ENCODE measurements at regions of chr3 and their contacts with region 1.

Region 1: DNA sequence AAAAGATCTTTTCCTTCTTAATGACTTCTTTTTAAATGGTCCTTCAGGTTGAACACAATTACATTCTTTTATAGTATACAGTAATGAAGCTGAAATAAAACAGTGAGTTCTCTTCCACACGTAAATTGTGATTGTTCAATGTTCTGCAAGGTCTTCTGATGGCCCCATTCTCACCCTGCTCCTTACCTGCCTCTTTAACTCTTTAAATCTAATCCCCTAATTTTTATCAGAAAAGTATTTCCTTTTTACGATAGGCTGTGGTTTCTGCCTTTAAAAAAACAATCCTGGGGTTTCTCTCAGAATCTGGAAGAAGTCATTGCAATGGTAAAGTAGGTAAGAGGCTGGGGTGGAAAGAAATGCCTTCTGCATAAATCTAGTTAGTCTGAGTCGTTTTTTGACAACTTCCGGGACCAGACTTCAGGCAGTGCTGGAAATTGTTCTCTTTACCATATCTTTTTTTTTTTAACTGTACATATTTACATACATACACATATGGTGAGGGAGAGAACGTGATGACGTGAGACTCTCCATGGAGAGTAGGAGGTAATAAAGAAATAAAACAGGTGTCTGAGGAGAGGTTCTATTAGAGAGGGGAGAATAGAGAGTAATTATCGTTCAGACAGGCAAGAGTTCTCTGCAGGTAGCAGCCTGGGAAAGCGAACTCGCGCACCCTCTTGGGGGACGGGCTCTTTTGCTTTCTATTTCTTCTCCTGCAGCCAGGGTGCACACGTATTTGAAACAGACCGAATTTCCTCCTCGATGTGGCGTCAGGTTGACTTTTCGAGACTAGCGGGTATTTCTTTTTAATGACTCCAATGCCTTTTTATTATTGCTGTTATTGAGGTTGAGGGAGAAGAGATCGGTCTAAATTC is at the start of gene SIDT1:
- DNase-seq: peak; percentile 71
- ATAC-seq: peak; percentile 71
- H3K4me3 ChIP-seq: peak within 1 kb of the TSS; percentile 97
- H3K27ac ChIP-seq: peak within 1 kb of the TSS; percentile 98
- H3K4me1 ChIP-seq: peaks cover 6% of the 10 kb centered on the region
- H3K27me3 ChIP-seq: no peaks in the 10 kb centered on the region
- CTCF ChIP-seq: peak in 1 of 3 experiments; percentile 25; a peak in 2 of 6 replicates
- EP300 ChIP-seq: 0 out of 4 replicates have a peak, but pooled peaks of 1 of the 2 experiments have one; percentile 26
- POLR2A ChIP-seq: peak; percentile 74
- RAD21 ChIP-seq: no peak
- polyA plus RNA-seq, gene SIDT1: 3.0 to 3.2 TPM

Region 2: DNA sequence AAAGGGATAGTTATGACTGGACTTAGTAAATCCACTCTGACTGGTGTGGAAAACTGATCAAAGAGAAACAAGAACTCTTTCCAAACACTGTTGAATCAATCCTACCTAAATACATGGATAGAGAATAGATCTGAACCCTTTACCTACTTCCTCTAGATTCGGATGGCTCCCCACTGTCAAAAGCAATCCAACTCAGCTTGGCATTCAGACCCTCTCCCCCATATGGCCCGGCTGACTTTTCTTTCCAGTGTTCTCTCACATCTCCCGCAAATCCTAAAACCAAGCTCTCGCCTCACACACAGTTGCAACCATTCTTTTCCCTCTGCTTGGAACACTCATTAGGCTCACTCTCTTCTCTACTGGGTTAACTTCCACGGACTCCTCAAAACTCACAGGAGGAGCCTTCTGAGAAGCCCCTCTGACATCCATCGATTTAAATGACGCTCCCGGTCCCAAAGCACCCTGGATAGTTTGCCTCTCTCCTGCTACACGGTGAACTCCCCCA is 17.7 kb before region 1 on chr3:
- CTCF ChIA-PET with region 1: interaction called, 12 read pairs
- POLR2A ChIA-PET with region 1: interaction called, 19 read pairs
- RAD21 ChIA-PET with region 1: interaction called, 10 read pairs
- SMC1A ChIA-PET with region 1: interaction called, 45 read pairs
- in situ Hi-C with region 1: no loop called
- intact Hi-C with region 1: loop called (anchors 1 kb)
- DNase-seq: no peak
- ATAC-seq: peak; percentile 9
- H3K4me3 ChIP-seq: peak overlapping the region; percentile 87
- H3K27ac ChIP-seq: peak overlapping the region; percentile 76
- H3K4me1 ChIP-seq: peaks cover 12% of the 10 kb centered on the region
- H3K27me3 ChIP-seq: no peaks in the 10 kb centered on the region
- CTCF ChIP-seq: no peak
- EP300 ChIP-seq: 0 out of 4 replicates have a peak, but pooled peaks of 1 of the 2 experiments have one; percentile 35
- POLR2A ChIP-seq: no peak
- RAD21 ChIP-seq: no peak

Region 3: DNA sequence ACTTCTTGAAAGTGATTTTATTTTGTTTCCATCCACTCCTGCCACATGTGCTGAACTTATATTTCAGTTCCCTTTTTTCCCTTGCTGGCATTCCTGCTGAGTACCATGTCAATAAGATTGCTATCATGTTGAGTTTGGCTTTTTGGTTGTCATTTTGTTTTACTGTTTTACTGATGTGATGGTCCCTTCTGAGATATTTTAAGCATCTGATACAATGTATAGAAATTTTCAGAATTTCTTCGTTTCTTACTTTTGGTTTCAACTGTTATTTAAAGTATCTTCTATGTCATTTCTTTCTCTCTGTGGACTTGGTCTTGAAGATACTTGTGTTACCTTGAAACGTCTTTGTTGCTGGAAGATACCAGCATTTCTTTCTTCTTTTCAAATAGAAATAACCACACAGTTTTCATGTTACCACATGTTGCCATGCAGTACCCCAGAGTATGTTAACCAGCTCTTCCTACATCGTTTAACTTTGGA is 14.4 kb after region 1 on chr3:
- CTCF ChIA-PET with region 1: interaction called, 74 read pairs
- POLR2A ChIA-PET with region 1: interaction called, 10 read pairs
- RAD21 ChIA-PET with region 1: interaction called, 35 read pairs
- SMC1A ChIA-PET with region 1: interaction called, 20 read pairs
- in situ Hi-C with region 1: no loop called
- intact Hi-C with region 1: loop called (anchors 1 kb)
- DNase-seq: peak; percentile 57
- ATAC-seq: peak; percentile 88
- H3K4me3 ChIP-seq: peak overlapping the region; percentile 52; the same call in 1 of the 2 replicates
- H3K27ac ChIP-seq: peak overlapping the region; percentile 76
- H3K4me1 ChIP-seq: peaks cover 26% of the 10 kb centered on the region
- H3K27me3 ChIP-seq: no peaks in the 10 kb centered on the region
- CTCF ChIP-seq: no peak
- EP300 ChIP-seq: 0 out of 4 replicates have a peak, but pooled peaks of 1 of the 2 experiments have one; percentile 39
- POLR2A ChIP-seq: no peak
- RAD21 ChIP-seq: no peak

Region 4: DNA sequence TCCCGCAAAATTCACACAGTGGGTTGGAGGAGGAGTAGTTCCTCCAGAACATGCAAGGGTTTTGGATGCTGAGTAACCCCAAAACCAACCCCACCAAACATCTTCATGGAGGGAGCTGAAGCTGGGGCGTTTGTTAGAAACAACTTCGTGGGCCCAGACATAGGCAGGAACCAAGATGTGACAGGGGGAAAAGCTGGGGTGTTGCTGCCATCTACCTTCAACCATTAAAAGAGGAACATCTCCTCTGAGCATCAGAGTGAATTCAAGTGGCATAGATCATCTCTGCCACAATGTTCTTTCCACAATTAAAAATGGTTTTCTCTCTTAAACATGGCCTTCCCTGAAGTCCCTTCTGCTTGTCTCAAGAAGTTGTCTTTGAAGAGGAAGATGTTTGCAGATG is 20.8 kb after region 1 on chr3:
- CTCF ChIA-PET with region 1: interaction called, 74 read pairs
- POLR2A ChIA-PET with region 1: interaction called, 4 read pairs
- RAD21 ChIA-PET with region 1: interaction called, 35 read pairs
- SMC1A ChIA-PET with region 1: interaction called, 20 read pairs
- in situ Hi-C with region 1: no loop called
- intact Hi-C with region 1: no loop called
- DNase-seq: no peak
- ATAC-seq: peak; percentile 85
- H3K4me3 ChIP-seq: no peak overlapping the region
- H3K27ac ChIP-seq: no peak overlapping the region; the same call in 1 of the 2 replicates
- H3K4me1 ChIP-seq: peaks cover 4% of the 10 kb centered on the region
- H3K27me3 ChIP-seq: no peaks in the 10 kb centered on the region
- CTCF ChIP-seq: peak in 2 of 3 experiments; percentile 24 to 67; a peak in 3 of 6 replicates
- EP300 ChIP-seq: no peak
- POLR2A ChIP-seq: no peak
- RAD21 ChIP-seq: peak; percentile 80

Region 5: DNA sequence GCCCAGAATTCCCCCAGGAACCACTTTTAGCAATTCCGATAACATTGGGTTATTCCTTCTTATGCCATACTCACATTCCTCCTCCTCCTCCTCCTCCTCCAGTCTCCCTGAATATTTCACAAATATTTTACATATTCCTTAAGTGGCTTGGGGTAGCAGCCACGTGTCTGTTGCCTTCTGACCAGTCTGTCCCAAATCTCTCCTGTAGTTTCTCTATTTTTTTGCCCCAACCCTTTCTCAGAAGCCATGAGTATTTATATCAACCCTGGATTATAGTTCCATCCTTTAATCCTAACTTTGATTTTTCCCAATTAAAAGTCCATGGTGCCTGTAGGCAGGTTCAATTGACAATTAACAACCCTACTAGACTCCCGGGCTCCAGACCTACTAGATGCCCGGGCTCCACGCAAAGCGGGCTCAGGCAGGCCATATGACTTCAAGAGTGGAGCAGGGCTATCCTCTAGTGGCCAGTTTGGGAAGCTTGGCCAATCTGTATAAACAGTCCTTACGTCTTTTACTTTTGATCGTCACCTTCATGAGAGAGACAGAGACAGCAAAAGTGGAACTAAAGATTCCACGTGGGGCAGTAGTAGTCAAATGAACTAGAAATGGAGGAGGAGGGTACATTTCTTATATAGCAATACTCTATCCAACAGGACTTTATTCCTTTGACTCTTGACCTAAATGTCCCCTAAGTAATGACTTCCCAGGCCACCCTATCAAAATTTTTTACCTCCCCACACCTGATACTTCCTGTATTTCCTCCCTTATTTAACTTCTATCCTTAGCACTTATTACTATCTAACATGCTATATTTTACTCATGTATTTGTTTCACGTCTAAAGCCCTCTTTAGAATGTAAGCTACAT is 94.7 kb after region 1 on chr3:
- CTCF ChIA-PET with region 1: no interaction called
- POLR2A ChIA-PET with region 1: no interaction called
- RAD21 ChIA-PET with region 1: no interaction called
- SMC1A ChIA-PET with region 1: no interaction called
- in situ Hi-C with region 1: no loop called
- intact Hi-C with region 1: no loop called
- DNase-seq: no peak
- ATAC-seq: peak; percentile 90
- H3K4me3 ChIP-seq: no peak overlapping the region
- H3K27ac ChIP-seq: no peak overlapping the region
- H3K4me1 ChIP-seq: peaks cover 8% of the 10 kb centered on the region
- H3K27me3 ChIP-seq: no peaks in the 10 kb centered on the region
- CTCF ChIP-seq: peak; percentile 58 to 64 (median 61)
- EP300 ChIP-seq: no peak
- POLR2A ChIP-seq: no peak
- RAD21 ChIP-seq: peak; percentile 68

Region 6: GRCh38 chr3:113838631-113839209 is 306.7 kb after region 1 on chr3 and contains the start of gene GRAMD1C:
- CTCF ChIA-PET with region 1: no interaction called
- POLR2A ChIA-PET with region 1: no interaction called
- RAD21 ChIA-PET with region 1: no interaction called
- SMC1A ChIA-PET with region 1: no interaction called
- in situ Hi-C with region 1: no loop called
- intact Hi-C with region 1: loop called (anchors 10 kb)
- DNase-seq: peak; percentile 59
- ATAC-seq: peak; percentile 98
- H3K4me3 ChIP-seq: peak within 1 kb of the TSS; percentile 54
- H3K27ac ChIP-seq: no peak within 1 kb of the TSS
- H3K4me1 ChIP-seq: peaks cover 3% of the 10 kb centered on the region; the same call in 1 of the 2 replicates
- H3K27me3 ChIP-seq: no peaks in the 10 kb centered on the region
- CTCF ChIP-seq: peak; percentile 86 to 89 (median 88)
- EP300 ChIP-seq: no peak
- POLR2A ChIP-seq: peak; percentile 40; the same call in 1 of the 2 replicates
- RAD21 ChIP-seq: peak; percentile 75
- polyA plus RNA-seq, gene GRAMD1C: 3.2 to 8.4 TPM

Measured in GM12878 (cell line).